Common myeloid progenitor, CD34-positive (primary cell): ENCODE measurements at regions of chr13 and their contacts with region 1.

Region 1: GRCh38 chr13:24700539-24700938 is 20.3 kb downstream of the ATP12A start:
- DNase-seq: no peak
- H3K4me3 ChIP-seq: no peak overlapping the region
- H3K27ac ChIP-seq: no peak overlapping the region
- H3K4me1 ChIP-seq: peaks cover 0 to 8% (median 2%) of the 10 kb centered on the region in 4 experiments
- H3K27me3 ChIP-seq: peaks cover 0 to 10% (median 0%) of the 10 kb centered on the region in 5 experiments

Region 2: DNA sequence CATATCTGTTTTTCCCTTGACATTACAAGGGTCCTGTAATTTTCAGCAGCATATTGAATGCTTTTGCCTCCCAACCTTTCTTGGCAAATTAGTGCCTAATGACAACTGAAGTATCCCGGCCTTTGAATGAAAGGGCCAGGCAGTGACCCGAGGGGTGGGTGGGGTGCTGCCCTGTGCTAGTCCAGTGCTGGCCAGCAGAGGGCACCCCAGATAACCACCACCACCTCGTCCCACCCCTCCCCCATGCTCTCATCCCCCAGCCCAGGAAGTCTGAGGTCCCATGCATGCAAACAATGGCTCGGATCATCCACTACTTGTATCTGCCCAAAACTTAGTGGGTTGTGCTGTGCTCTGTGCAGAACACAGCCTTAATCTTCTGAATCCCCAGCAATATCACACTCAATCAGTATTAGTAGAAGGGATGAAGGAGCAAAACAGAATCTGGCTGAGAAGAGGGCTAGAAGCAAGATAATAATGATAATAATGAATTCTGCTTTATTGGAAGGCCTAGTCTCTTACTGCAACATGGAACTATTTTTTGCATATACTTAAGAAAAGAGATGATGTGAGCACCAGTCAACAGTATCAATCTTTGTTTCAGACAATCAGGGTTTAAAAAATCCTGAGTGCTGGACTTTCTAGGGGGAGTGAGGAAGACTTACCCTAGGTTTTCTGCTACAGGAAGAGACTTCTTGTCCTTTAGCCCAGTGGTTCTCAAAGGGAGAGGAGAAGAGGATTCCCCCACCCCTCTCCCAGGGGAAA is 16.5 kb before region 1 on chr13:
- CTCF ChIA-PET with region 1: interaction called, 90 read pairs
- POLR2A ChIA-PET with region 1: no interaction called
- DNase-seq: peak; percentile 52 to 61 (median 58)
- H3K4me3 ChIP-seq: no peak overlapping the region
- H3K27ac ChIP-seq: no peak overlapping the region
- H3K4me1 ChIP-seq: peaks cover 4 to 33% (median 30%) of the 10 kb centered on the region in 4 experiments
- H3K27me3 ChIP-seq: peaks cover 0 to 29% (median 16%) of the 10 kb centered on the region in 5 experiments